Pancreas (tissue), 10 donors: ENCODE measurements at regions of chr5 and their contacts with region 1.

Region 1: DNA sequence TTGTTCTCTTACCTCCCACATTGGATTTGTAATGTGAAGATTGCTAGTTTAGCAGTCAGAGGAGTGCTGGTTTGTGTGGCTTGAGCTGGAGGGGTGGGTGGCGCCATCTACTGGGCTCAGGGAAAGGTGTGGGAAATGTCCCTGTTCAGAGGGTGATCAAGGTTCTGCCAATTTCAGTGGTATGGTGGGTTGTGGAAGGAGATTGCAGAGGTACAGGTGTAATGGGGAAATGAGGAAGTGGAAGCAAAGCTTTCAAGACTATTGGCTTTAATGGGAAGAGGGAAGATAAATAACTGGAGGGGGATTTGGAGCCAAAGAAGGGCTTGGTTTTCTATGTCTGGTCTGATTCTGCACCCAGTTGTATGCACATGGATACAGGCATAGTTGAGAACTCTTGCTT is 76.4 kb downstream of the OSMR start:
- DNase-seq: peak in 5 of 6 donors; percentile 25 to 65 (median 59)
- ATAC-seq: peak; percentile 69 to 95 (median 86)
- H3K4me3 ChIP-seq: no peak overlapping the region
- H3K27ac ChIP-seq: no peak overlapping the region
- H3K4me1 ChIP-seq: peaks cover 7% of the 10 kb centered on the region in 3 donors
- H3K27me3 ChIP-seq: no peaks in the 10 kb centered on the region
- CTCF ChIP-seq: peak; percentile 51 to 72 (median 64)

Region 2: DNA sequence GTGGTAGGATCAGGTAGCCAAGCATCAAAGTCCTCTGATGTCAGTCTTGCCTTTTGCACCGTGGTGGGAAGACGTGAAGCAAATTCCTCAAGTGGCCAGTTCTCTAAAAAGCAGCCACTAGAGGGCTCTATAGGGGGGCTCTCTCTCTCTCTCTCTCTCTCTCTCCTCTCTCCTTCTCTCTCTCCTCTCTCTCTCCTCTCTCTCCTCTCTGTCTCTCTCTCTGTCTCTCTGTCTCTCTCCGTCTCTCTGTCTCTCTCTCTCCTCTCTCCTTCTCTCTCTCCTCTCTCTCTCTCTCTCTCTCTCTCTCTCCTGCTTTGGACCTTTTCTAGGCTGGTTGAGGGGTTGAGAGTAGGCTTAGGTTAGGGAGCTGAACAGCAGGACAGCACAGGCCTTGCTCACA is 90.3 kb before region 1 on chr5:
- intact Hi-C with region 1: loop called in 1 of 3 experiments (anchors 10 kb)
- DNase-seq: no peak
- ATAC-seq: peak in 3 of 4 donors; percentile 43 to 82 (median 67)
- H3K4me3 ChIP-seq: no peak overlapping the region
- H3K27ac ChIP-seq: no peak overlapping the region
- H3K4me1 ChIP-seq: no peaks in the 10 kb centered on the region
- H3K27me3 ChIP-seq: no peaks in the 10 kb centered on the region
- CTCF ChIP-seq: peak in 1 of 4 donors; percentile 13

Region 3: GRCh38 chr5:39399135-39400036 is 477.2 kb after region 1 on chr5:
- intact Hi-C with region 1: no loop called
- DNase-seq: no peak
- ATAC-seq: peak in 3 of 4 donors; percentile 66 to 84 (median 78)
- H3K4me3 ChIP-seq: no peak overlapping the region
- H3K27ac ChIP-seq: peak overlapping the region in 2 of 4 donors; percentile 20 to 44
- H3K4me1 ChIP-seq: peaks cover 0 to 4% (median 0%) of the 10 kb centered on the region in 3 donors
- H3K27me3 ChIP-seq: no peaks in the 10 kb centered on the region
- CTCF ChIP-seq: no peak